Activated CD4-positive, alpha-beta T cell treated with anti-CD3 and anti-CD28 coated beads for 36 hours (primary cell): ENCODE measurements at regions of chr7 and their contacts with region 1.

Region 1: GRCh38 chr7:7103343-7104313 is 78.7 kb upstream of the C1GALT1 start:
- DNase-seq: no peak
- ATAC-seq: peak; percentile 57
- H3K4me3 Mint-ChIP-seq: no peak overlapping the region
- H3K27ac Mint-ChIP-seq: no peak overlapping the region
- H3K4me1 Mint-ChIP-seq: peaks cover 27% of the 10 kb centered on the region
- H3K27me3 Mint-ChIP-seq: no peaks in the 10 kb centered on the region

Region 2: DNA sequence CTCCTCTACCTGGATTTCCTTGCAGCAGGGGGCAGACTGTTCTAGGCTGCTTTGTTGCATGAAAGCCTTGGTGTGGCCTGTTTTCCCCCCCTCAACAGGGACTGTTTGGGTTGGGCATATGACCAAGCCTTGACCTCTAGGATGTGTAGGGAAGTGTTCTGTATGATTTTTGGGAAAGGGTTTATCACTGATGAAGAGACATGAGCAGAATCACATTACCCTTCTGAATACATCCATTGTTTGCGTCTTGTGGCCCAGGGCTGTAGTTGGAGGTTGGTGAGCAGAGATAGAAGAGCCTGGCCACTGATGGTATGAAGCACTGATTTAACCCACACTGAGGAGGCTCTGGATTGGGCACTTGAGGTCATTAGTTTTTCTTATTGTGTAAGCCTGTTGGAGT is 423.5 kb before region 1 on chr7:
- CTCF ChIA-PET with region 1: no interaction called
- POLR2A ChIA-PET with region 1: no interaction called
- intact Hi-C with region 1: no loop called
- DNase-seq: no peak
- ATAC-seq: no peak
- H3K4me3 Mint-ChIP-seq: no peak overlapping the region
- H3K27ac Mint-ChIP-seq: no peak overlapping the region
- H3K4me1 Mint-ChIP-seq: no peaks in the 10 kb centered on the region
- H3K27me3 Mint-ChIP-seq: no peaks in the 10 kb centered on the region

Region 3: GRCh38 chr7:7090460-7090859 is 13.2 kb before region 1 on chr7:
- CTCF ChIA-PET with region 1: interaction called, 12 read pairs
- POLR2A ChIA-PET with region 1: no interaction called
- intact Hi-C with region 1: no loop called
- DNase-seq: no peak
- ATAC-seq: no peak
- H3K4me3 Mint-ChIP-seq: no peak overlapping the region
- H3K27ac Mint-ChIP-seq: no peak overlapping the region
- H3K4me1 Mint-ChIP-seq: no peaks in the 10 kb centered on the region
- H3K27me3 Mint-ChIP-seq: peaks cover 7% of the 10 kb centered on the region

Region 4: DNA sequence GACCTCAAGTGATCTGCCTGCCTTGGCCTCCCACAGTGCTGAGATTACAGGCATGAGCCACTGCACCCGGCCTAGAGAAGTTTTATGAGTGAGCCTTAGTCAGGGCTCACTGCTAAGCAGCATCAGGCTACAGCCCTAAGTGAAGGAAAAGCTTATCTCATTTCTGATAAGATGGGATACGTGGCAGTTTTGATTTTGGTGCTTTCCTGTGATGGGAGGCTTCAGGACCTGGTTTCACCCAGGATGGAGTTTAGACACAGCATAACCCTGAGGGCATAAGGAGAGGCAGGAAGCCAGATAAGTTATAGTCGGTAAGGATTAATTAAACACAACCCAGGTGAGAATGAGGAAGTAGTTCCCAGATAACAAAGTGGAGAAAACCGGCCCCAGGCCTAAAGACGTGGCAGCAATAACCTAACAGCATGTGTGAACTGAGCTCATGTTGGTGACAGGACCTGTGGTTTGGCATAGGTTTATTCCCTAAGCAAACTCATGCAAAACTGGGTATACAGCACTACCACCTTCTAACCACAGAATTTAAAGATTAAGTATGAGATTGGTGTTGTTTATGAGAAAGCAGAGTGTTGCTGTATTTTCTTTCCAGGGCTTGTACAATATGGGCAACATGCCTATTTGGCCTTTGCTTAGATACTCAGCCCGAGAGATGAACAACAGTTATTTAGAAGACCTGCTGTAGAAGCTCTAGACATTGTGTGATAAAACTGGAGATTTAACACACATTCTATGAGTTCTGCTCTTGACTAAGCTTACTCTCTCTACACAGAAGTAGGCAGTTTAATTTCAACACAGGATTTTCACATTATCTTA is 312.6 kb after region 1 on chr7:
- CTCF ChIA-PET with region 1: interaction called, 4 read pairs
- POLR2A ChIA-PET with region 1: no interaction called
- intact Hi-C with region 1: loop called (anchors 5 kb)
- DNase-seq: peak; percentile 55
- ATAC-seq: peak; percentile 88
- H3K4me3 Mint-ChIP-seq: no peak overlapping the region
- H3K27ac Mint-ChIP-seq: peak overlapping the region; percentile 89
- H3K4me1 Mint-ChIP-seq: peaks cover 14% of the 10 kb centered on the region
- H3K27me3 Mint-ChIP-seq: no peaks in the 10 kb centered on the region

Region 5: DNA sequence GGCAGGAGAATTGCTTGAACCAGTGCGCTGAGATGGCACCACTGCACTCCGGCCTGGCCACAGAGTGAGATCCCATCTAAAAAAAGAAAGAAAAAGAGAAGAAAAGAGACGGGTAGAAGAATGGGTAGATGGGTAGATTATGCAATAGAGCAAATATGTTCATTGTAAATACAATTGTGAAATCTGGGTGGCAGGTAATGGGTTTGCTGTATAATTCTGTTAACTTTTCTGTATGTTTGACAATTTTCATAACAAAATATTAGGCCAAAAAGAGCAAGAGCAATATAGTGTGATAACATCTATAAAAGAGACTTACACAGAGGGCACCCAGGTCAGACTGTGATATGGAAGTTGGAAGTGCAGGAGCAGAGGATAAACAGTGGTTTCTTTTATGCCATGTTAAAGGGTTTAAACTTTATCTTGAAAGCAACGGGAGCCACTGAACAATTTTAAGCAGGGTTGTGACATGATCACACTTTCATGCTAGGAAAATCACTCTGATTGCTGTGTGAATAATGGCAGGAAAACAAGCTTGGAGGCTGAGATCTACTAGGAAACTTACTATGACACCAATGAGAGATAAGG is 438.7 kb after region 1 on chr7:
- CTCF ChIA-PET with region 1: interaction called, 4 read pairs
- POLR2A ChIA-PET with region 1: no interaction called
- intact Hi-C with region 1: loop called (anchors 2 kb)
- DNase-seq: no peak
- ATAC-seq: no peak
- H3K4me3 Mint-ChIP-seq: no peak overlapping the region
- H3K27ac Mint-ChIP-seq: no peak overlapping the region
- H3K4me1 Mint-ChIP-seq: no peaks in the 10 kb centered on the region
- H3K27me3 Mint-ChIP-seq: peaks cover 7% of the 10 kb centered on the region

Region 6: DNA sequence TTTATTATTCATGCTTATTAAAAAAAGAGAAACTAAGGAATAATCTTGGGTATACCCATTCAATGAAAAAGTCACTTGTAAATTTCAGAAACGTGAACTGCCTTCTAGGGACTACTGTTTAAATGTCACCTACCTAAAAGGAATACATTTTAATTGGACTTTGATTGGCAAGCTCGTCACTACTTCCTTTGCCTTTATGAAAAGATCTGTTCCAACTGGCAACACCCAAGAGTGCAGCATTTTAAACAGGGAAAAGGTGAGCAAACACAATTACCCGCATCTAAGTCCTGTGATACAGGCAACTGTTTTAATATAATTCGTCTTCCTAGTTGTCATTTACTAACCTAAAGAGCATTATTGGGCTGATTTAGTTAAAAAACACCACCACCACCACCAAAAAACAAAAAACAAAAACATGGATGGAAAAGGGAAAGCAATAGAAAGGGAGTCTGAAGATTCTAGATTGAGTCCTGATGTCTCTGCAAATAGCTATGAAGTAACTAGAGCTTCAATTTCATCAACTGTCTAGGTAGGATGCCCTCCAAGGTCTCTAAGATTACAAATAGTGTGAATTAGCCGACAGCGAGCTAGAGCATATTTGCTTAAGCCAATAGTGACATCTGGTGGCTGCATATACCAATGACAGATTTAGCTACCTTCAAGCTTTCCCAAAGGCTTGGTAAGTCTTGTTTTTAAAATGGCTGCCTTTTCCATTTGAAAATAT is 1192.2 kb after region 1 on chr7:
- CTCF ChIA-PET with region 1: interaction called, 4 read pairs
- POLR2A ChIA-PET with region 1: no interaction called
- intact Hi-C with region 1: loop called in 1 of 2 experiments (anchors 5 kb)
- DNase-seq: peak; percentile 25
- ATAC-seq: peak; percentile 80
- H3K4me3 Mint-ChIP-seq: no peak overlapping the region
- H3K27ac Mint-ChIP-seq: no peak overlapping the region
- H3K4me1 Mint-ChIP-seq: peaks cover 2% of the 10 kb centered on the region
- H3K27me3 Mint-ChIP-seq: peaks cover 10% of the 10 kb centered on the region